ENCODE measurements at regions of chr9 and their contacts with region 1.

Region 1: DNA sequence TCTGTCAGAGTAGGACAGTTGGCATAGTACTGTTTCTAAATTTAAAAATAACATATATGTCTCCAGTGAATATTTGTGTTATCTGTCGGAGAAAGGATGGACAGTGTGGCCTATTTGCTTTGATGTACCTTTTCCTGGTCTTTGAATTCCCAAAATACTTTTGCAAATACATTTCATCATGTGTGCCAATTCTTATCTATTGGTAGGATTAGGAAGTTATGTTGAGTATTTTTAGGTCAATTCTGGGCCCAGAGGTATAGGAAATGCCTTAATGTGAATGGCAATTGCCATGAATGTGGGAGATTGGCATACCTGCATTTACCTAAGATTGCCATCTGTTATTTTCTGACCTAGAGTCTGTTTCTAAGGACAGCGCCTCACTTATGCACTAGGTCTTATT is 5.8 kb downstream of the FOCAD start:
- DNase-seq: no peak
- ATAC-seq: no peak
- H3K4me3 ChIP-seq: no peak overlapping the region
- H3K4me3 Mint-ChIP-seq: no peak overlapping the region
- H3K27ac ChIP-seq: no peak overlapping the region
- H3K27ac Mint-ChIP-seq: no peak overlapping the region
- H3K4me1 ChIP-seq: peaks cover 0 to 6% of the 10 kb centered on the region in 2 donors
- H3K4me1 Mint-ChIP-seq: peaks cover 8 to 19% (median 17%) of the 10 kb centered on the region in 7 donors
- H3K27me3 ChIP-seq: no peaks in the 10 kb centered on the region
- H3K27me3 Mint-ChIP-seq: no peaks in the 10 kb centered on the region

Region 2: GRCh38 chr9:20570756-20571155 is 119.1 kb before region 1 on chr9:
- CTCF ChIA-PET with region 1: no interaction called
- POLR2A ChIA-PET with region 1: no interaction called
- intact Hi-C with region 1: no loop called
- DNase-seq: no peak
- ATAC-seq: no peak
- H3K4me3 ChIP-seq: no peak overlapping the region
- H3K4me3 Mint-ChIP-seq: peak overlapping the region in 4 of 10 donors; percentile 7 to 51 (median 29)
- H3K27ac ChIP-seq: no peak overlapping the region
- H3K27ac Mint-ChIP-seq: peak overlapping the region in 1 of 9 donors; percentile 22
- H3K4me1 ChIP-seq: peaks cover 0 to 21% of the 10 kb centered on the region in 2 donors
- H3K4me1 Mint-ChIP-seq: peaks cover 45 to 91% (median 85%) of the 10 kb centered on the region in 7 donors
- H3K27me3 ChIP-seq: no peaks in the 10 kb centered on the region
- H3K27me3 Mint-ChIP-seq: no peaks in the 10 kb centered on the region

Region 3: GRCh38 chr9:20701060-20701459 is 11.2 kb after region 1 on chr9:
- CTCF ChIA-PET with region 1: no interaction called
- POLR2A ChIA-PET with region 1: interaction called, 3 read pairs
- intact Hi-C with region 1: loop called in 1 of 2 experiments (anchors 2 kb)
- DNase-seq: no peak
- ATAC-seq: no peak
- H3K4me3 ChIP-seq: no peak overlapping the region
- H3K4me3 Mint-ChIP-seq: no peak overlapping the region
- H3K27ac ChIP-seq: no peak overlapping the region
- H3K27ac Mint-ChIP-seq: peak overlapping the region in 1 of 9 donors; percentile 7
- H3K4me1 ChIP-seq: peaks cover 0 to 4% of the 10 kb centered on the region in 2 donors
- H3K4me1 Mint-ChIP-seq: peaks cover 5 to 26% (median 13%) of the 10 kb centered on the region in 7 donors
- H3K27me3 ChIP-seq: no peaks in the 10 kb centered on the region
- H3K27me3 Mint-ChIP-seq: no peaks in the 10 kb centered on the region

Region 4: GRCh38 chr9:21305213-21305612 is 615.4 kb after region 1 on chr9 and contains the start of gene IFNA5:
- CTCF ChIA-PET with region 1: no interaction called
- POLR2A ChIA-PET with region 1: no interaction called
- intact Hi-C with region 1: no loop called
- DNase-seq: no peak
- ATAC-seq: no peak
- H3K4me3 ChIP-seq: no peak within 1 kb of the TSS
- H3K4me3 Mint-ChIP-seq: no peak within 1 kb of the TSS
- H3K27ac ChIP-seq: no peak within 1 kb of the TSS
- H3K27ac Mint-ChIP-seq: no peak within 1 kb of the TSS
- H3K4me1 ChIP-seq: no peaks in the 10 kb centered on the region
- H3K4me1 Mint-ChIP-seq: no peaks in the 10 kb centered on the region
- H3K27me3 ChIP-seq: peaks cover 0 to 8% of the 10 kb centered on the region in 2 donors
- H3K27me3 Mint-ChIP-seq: peaks cover 43 to 67% (median 53%) of the 10 kb centered on the region in 5 donors
- total RNA-seq, gene IFNA5: not detected